ENCODE measurements at regions of chr18 and their contacts with region 1.

Region 1: GRCh38 chr18:63422087-63422809 is at the start of gene VPS4B:
- DNase-seq: peak; percentile 98 to 100 (median 99)
- H3K4me3 ChIP-seq: peak within 1 kb of the TSS; percentile 52 to 99 (median 95)
- H3K27ac ChIP-seq: peak within 1 kb of the TSS; percentile 80 to 100 (median 97)
- H3K27me3 ChIP-seq: no peaks in the 10 kb centered on the region
- CTCF ChIP-seq: peak in 28 of 56 donors; percentile 3 to 58 (median 30)
- total RNA-seq, gene VPS4B: 23.5 to 78.1 (median 53.7) TPM

Region 2: DNA sequence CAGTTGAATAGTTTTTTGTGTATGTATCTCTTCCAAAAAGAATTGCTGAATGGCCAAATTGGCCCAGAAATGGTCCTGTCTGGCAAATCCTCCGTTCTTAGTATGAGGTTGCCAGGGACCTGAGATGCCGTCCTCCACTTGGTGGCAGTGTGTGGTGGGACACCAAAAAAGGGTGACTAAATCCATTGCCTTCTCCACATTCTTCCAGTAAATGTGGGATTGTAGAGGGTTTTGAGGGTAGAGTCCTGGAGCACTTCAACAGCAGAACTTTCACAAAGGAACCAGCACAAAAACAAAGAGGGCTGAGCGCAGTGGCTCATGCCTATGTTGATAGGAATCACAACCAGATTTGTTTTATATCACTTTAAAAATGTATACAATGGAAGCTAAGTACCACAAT is 302.6 kb before region 1 on chr18:
- intact Hi-C with region 1: loop called in 1 of 2 experiments (anchors 10 kb)
- DNase-seq: peak in 8 of 10 donors; percentile 24 to 75 (median 64)
- H3K4me3 ChIP-seq: no peak overlapping the region
- H3K27ac ChIP-seq: no peak overlapping the region
- H3K27me3 ChIP-seq: peaks cover 0 to 5% (median 0%) of the 10 kb centered on the region in 45 donors
- CTCF ChIP-seq: peak; percentile 18 to 81 (median 64)

Region 3: GRCh38 chr18:63367053-63367953 is 54.9 kb before region 1 on chr18 and contains the start of gene KDSR:
- intact Hi-C with region 1: loop called (anchors 1 kb)
- DNase-seq: peak; percentile 75 to 95 (median 92)
- H3K4me3 ChIP-seq: peak within 1 kb of the TSS; percentile 77 to 97 (median 89)
- H3K27ac ChIP-seq: peak within 1 kb of the TSS; percentile 75 to 99 (median 96)
- H3K27me3 ChIP-seq: no peaks in the 10 kb centered on the region
- CTCF ChIP-seq: peak in 19 of 56 donors; percentile 2 to 54 (median 24)
- total RNA-seq, gene KDSR: 43.2 to 111 (median 58.5) TPM

Region 4: DNA sequence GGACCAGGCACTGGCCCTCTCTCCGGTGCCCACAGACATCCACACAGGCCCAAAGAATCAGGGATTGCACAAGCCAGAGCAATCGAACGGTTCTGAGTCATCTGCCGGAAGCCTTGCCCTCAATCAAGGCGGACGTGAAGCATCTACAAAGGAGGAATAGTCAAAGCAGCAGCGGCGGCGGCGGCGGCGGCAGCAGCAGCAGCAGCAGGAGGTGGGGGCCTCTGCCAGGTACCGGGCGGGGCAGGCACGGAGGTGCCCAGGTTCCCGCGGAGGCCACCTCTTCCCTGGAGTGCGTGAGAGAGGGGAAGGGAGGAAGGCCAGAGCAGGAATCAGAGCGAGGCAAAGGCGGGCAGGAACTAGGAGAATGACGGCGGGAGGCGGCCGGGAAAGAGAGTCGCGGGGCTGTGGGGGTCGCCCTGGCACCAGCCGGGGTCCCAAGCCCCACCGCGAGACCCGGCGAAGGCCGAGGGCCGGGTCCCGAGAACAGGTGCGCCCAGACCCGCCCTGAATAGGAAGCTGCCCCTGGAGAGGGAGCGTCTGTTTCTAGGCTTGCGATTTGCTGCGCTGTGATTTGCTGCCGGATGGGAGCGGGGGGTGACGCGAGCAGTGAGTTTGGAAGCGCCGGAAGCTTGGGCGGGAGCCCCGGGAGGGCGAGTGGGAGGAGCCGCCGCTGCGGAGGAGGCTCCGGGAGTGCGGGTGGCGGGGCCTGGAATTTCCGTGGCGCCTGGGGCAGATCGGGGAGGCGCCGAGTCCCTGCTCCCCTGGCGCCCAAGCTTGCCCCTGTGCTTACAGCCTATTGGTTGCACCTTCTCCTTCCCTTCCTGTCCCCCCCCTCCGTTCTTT is 547.9 kb after region 1 on chr18 and contains the start of gene SERPINB8:
- intact Hi-C with region 1: loop called in 1 of 2 experiments (anchors 5 kb)
- DNase-seq: peak; percentile 79 to 97 (median 93)
- H3K4me3 ChIP-seq: peak within 1 kb of the TSS; percentile 67 to 98 (median 87)
- H3K27ac ChIP-seq: peak within 1 kb of the TSS; percentile 82 to 99 (median 97)
- H3K27me3 ChIP-seq: no peaks in the 10 kb centered on the region
- CTCF ChIP-seq: peak in 31 of 56 donors; percentile 5 to 53 (median 21)
- total RNA-seq, gene SERPINB8: 1.8 to 12.8 (median 5.7) TPM